GM12878 (cell line): ENCODE measurements at regions of chr5 and their contacts with region 1.

Region 1: DNA sequence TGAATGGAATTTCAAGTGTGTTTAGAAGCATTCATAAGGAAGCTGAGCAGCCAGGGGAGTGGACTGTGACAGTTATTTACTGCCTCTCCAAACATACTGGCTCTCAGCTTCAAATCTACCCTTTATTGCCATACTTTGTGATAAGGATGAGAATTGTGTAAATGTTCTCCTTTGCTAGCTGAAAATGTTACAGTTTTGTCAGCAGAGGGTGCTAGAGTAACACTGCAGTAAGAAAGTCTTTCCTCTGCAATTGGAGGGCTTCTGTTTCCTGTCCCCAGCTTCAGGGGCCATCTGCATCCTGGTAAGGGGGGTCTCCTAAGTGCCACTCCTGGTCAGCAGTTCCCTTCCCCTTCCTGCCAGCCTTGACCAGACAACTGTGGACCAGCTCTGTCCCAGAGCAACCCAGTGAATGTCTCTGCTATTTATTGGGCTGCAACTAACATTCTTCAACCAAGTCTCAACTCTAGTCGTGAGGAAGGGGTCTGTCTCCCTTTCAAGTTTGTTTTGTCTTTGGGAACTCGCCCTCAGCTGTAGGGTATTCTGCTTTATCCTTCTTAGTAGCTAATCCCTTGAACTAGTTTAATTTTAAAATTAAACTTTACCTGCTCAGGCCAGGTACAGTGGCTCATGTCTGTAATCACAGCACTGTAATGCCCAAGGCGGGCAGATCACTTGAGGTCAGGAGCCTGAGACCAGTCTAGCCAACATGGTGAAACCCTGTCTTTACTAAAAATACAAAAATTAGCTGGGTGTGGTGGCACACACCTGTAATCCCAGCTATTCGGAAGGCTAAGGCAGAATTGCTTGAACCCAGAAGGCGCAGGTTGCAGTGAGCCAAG is 45.3 kb downstream of the RAPGEF6 start:
- DNase-seq: peak; percentile 23
- ATAC-seq: peak; percentile 84
- H3K4me3 ChIP-seq: no peak overlapping the region
- H3K27ac ChIP-seq: no peak overlapping the region
- H3K4me1 ChIP-seq: peaks cover 2% of the 10 kb centered on the region; the same call in 1 of the 2 replicates
- H3K27me3 ChIP-seq: no peaks in the 10 kb centered on the region
- CTCF ChIP-seq: peak; percentile 83 to 85 (median 83)
- EP300 ChIP-seq: no peak
- POLR2A ChIP-seq: no peak
- RAD21 ChIP-seq: peak; percentile 96

Region 2: DNA sequence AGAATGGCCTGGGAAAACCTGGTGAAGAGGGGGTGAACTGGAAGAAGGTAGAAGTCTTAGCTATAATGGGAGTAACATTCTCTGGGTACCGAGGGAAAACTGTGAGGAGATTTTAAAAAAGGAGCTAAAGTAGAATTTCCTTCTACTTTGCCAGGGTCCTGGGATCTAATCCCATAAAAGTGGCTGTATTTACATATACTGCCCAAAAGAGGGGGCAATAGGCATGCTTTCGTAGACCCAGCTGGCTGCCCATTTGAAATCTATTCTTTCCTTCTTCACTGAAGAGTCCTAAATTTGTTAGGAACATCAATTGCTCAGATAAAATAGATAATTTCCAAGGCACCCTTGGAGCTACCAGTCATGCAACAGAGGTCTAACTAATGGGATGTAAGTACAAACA is 166.7 kb before region 1 on chr5:
- CTCF ChIA-PET with region 1: interaction called, 13 read pairs
- POLR2A ChIA-PET with region 1: no interaction called
- RAD21 ChIA-PET with region 1: no interaction called
- SMC1A ChIA-PET with region 1: interaction called, 8 read pairs
- in situ Hi-C with region 1: no loop called
- intact Hi-C with region 1: no loop called
- DNase-seq: no peak
- ATAC-seq: no peak; the same call in 2 of the 3 replicates
- H3K4me3 ChIP-seq: no peak overlapping the region
- H3K27ac ChIP-seq: no peak overlapping the region
- H3K4me1 ChIP-seq: 0 out of 2 replicates have a peak, but pooled peaks cover 2% of the 10 kb centered on the region
- H3K27me3 ChIP-seq: no peaks in the 10 kb centered on the region
- CTCF ChIP-seq: peak; percentile 19 to 55 (median 41); a peak in 3 of 6 replicates
- EP300 ChIP-seq: no peak
- POLR2A ChIP-seq: no peak
- RAD21 ChIP-seq: peak; percentile 40; the same call in 1 of the 2 replicates

Region 3: GRCh38 chr5:131628990-131629389 is 39.3 kb after region 1 on chr5:
- CTCF ChIA-PET with region 1: interaction called, 36 read pairs
- POLR2A ChIA-PET with region 1: interaction called, 9 read pairs
- RAD21 ChIA-PET with region 1: interaction called, 16 read pairs
- SMC1A ChIA-PET with region 1: interaction called, 24 read pairs
- in situ Hi-C with region 1: no loop called
- intact Hi-C with region 1: no loop called
- DNase-seq: no peak
- ATAC-seq: no peak
- H3K4me3 ChIP-seq: peak overlapping the region; percentile 37; the same call in 1 of the 2 replicates
- H3K27ac ChIP-seq: no peak overlapping the region; the same call in 1 of the 2 replicates
- H3K4me1 ChIP-seq: peaks cover 5% of the 10 kb centered on the region
- H3K27me3 ChIP-seq: no peaks in the 10 kb centered on the region
- CTCF ChIP-seq: no peak
- EP300 ChIP-seq: no peak
- POLR2A ChIP-seq: no peak
- RAD21 ChIP-seq: no peak

Region 4: GRCh38 chr5:131647048-131647769 is 57.5 kb after region 1 on chr5:
- CTCF ChIA-PET with region 1: interaction called, 32 read pairs
- POLR2A ChIA-PET with region 1: no interaction called
- RAD21 ChIA-PET with region 1: interaction called, 31 read pairs
- SMC1A ChIA-PET with region 1: interaction called, 38 read pairs
- in situ Hi-C with region 1: no loop called
- intact Hi-C with region 1: no loop called
- DNase-seq: peak; percentile 36
- ATAC-seq: peak; percentile 94
- H3K4me3 ChIP-seq: peak overlapping the region; percentile 7; the same call in 1 of the 2 replicates
- H3K27ac ChIP-seq: peak overlapping the region; percentile 61
- H3K4me1 ChIP-seq: peaks cover 12% of the 10 kb centered on the region
- H3K27me3 ChIP-seq: no peaks in the 10 kb centered on the region
- CTCF ChIP-seq: peak; percentile 18 to 35 (median 30); a peak in 3 of 6 replicates
- EP300 ChIP-seq: peak in 1 of 2 experiments; percentile 24; a peak in 1 of 4 replicates
- POLR2A ChIP-seq: no peak
- RAD21 ChIP-seq: peak; percentile 43

Region 5: DNA sequence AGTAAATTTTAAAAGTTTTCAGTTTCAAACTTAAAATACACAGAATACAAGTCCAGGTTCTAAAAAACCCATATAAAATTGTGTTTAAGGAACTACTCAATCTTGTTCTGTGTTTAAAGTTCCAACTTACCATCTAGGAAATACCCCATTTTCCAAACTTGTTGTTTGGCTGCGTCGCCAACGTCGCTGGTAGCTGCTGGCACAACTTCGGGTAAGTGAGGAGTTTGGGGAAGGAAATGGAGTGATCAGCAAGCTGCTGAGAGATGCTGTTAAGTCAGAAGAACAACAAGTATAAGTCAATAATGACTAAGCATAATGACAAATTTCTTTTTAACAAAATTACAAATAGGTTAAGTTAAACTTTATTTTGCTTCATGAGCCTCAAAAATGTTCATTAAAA is 116.6 kb after region 1 on chr5:
- CTCF ChIA-PET with region 1: interaction called, 4 read pairs
- POLR2A ChIA-PET with region 1: no interaction called
- RAD21 ChIA-PET with region 1: interaction called, 6 read pairs
- SMC1A ChIA-PET with region 1: no interaction called
- in situ Hi-C with region 1: no loop called
- intact Hi-C with region 1: loop called (anchors 10 kb)
- DNase-seq: no peak
- ATAC-seq: no peak
- H3K4me3 ChIP-seq: no peak overlapping the region
- H3K27ac ChIP-seq: no peak overlapping the region
- H3K4me1 ChIP-seq: no peaks in the 10 kb centered on the region
- H3K27me3 ChIP-seq: no peaks in the 10 kb centered on the region
- CTCF ChIP-seq: no peak
- EP300 ChIP-seq: no peak
- POLR2A ChIP-seq: no peak
- RAD21 ChIP-seq: no peak

Region 6: GRCh38 chr5:132007399-132008165 is 417.9 kb after region 1 on chr5:
- CTCF ChIA-PET with region 1: interaction called, 189 read pairs
- POLR2A ChIA-PET with region 1: no interaction called
- RAD21 ChIA-PET with region 1: interaction called, 98 read pairs
- SMC1A ChIA-PET with region 1: interaction called, 76 read pairs
- in situ Hi-C with region 1: loop called (anchors 5 kb)
- intact Hi-C with region 1: loop called (anchors 1 kb)
- DNase-seq: peak; percentile 49
- ATAC-seq: peak; percentile 93
- H3K4me3 ChIP-seq: no peak overlapping the region
- H3K27ac ChIP-seq: no peak overlapping the region
- H3K4me1 ChIP-seq: no peaks in the 10 kb centered on the region; the same call in 1 of the 2 replicates
- H3K27me3 ChIP-seq: peaks cover 16 to 17% of the 10 kb centered on the region in 2 experiments; a peak in 3 of 4 replicates
- CTCF ChIP-seq: peak; percentile 68 to 77 (median 76); a peak in 5 of 6 replicates
- EP300 ChIP-seq: no peak
- POLR2A ChIP-seq: no peak
- RAD21 ChIP-seq: peak; percentile 91